ENCODE measurements at regions of chr18 and their contacts with region 1.

Region 1: GRCh38 chr18:80171054-80171872 is 62.2 kb downstream of the ADNP2 start:
- DNase-seq: peak in 1 of 2 experiments; percentile 96
- H3K4me3 ChIP-seq: no peak overlapping the region
- H3K27ac ChIP-seq: no peak overlapping the region
- H3K4me1 ChIP-seq: no peaks in the 10 kb centered on the region
- H3K27me3 ChIP-seq: no peaks in the 10 kb centered on the region
- CTCF ChIP-seq: peak; percentile 85 to 97 (median 93)
- EP300 ChIP-seq: no peak
- POLR2A ChIP-seq: no peak
- RAD21 ChIP-seq: peak; percentile 90

Region 2: GRCh38 chr18:79856119-79857007 is 314.9 kb before region 1 on chr18:
- CTCF ChIA-PET with region 1: no interaction called
- POLR2A ChIA-PET with region 1: no interaction called
- DNase-seq: peak; percentile 27 to 68
- H3K4me3 ChIP-seq: no peak overlapping the region
- H3K27ac ChIP-seq: no peak overlapping the region
- H3K4me1 ChIP-seq: peaks cover 0 to 5% (median 3%) of the 10 kb centered on the region in 4 experiments; a peak in 3 of 7 replicates
- H3K27me3 ChIP-seq: no peaks in the 10 kb centered on the region
- CTCF ChIP-seq: no peak
- EP300 ChIP-seq: no peak
- POLR2A ChIP-seq: no peak
- RAD21 ChIP-seq: no peak

Region 3: DNA sequence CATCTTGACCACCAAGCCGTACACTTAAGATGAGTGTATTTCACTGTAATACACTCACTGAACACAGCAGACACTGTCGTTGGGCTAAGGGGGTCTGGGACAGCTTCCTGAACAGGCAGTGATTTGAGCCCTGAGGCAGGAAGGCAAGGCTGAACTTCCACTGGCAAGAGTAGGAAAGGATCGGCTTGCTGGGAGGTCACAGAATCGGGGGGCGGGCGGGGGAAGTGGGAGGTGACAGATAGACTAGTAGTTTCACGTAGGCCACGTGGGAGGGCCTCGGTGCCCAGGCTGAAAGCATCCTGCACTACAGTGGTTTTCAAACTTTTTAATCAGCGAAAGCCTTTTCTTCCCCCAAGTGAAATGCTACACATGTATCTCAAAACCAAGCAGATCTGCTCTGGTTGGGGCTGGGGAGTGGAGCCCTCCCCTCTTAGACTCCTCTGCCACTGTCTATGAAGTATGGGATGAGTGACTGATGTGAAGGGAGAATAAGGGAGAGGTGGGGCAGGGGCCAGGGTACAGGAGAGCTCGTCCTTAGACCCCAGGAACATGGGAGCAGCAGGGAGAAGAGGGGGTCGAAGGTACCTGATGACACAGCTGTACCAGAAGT is 67.5 kb after region 1 on chr18:
- CTCF ChIA-PET with region 1: interaction called, 19 read pairs
- POLR2A ChIA-PET with region 1: interaction called, 3 read pairs
- DNase-seq: no peak
- H3K4me3 ChIP-seq: no peak overlapping the region
- H3K27ac ChIP-seq: no peak overlapping the region
- H3K4me1 ChIP-seq: peaks cover 0 to 4% (median 0%) of the 10 kb centered on the region in 4 experiments; a peak in 3 of 7 replicates
- H3K27me3 ChIP-seq: no peaks in the 10 kb centered on the region
- CTCF ChIP-seq: no peak
- EP300 ChIP-seq: no peak
- POLR2A ChIP-seq: no peak
- RAD21 ChIP-seq: no peak

Region 4: DNA sequence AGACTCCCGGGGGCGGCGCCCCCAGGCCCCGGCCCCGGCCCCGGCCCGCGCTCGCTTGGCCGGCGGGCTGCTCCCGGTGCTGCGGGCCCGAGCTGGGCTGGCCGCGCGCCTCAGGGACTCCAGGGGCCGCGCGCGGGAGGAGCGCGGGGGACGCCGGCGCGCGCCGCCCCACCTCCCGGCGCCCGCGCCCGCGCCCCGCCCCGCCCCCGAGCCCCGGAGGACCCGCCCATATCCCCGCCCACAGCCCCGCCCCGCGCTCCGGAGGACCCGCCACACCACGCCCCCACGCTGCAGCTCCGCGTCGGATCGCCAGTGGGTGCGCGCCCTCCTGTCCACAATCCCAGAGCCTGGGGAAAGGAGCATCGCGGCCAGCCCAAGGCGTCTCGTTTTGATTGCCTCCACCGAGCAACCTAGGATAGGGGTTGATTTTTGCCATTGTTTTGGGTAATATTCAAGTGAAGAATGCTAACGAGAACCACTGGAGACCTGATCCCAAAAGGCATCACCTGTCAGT is 76.2 kb after region 1 on chr18 and contains the start of gene PARD6G:
- CTCF ChIA-PET with region 1: interaction called, 11 read pairs
- POLR2A ChIA-PET with region 1: interaction called, 3 read pairs
- DNase-seq: peak in 1 of 2 experiments; percentile 79
- H3K4me3 ChIP-seq: peak within 1 kb of the TSS; percentile 71 to 96 (median 75)
- H3K27ac ChIP-seq: no peak within 1 kb of the TSS
- H3K4me1 ChIP-seq: peaks cover 0 to 5% (median 0%) of the 10 kb centered on the region in 4 experiments; a peak in 1 of 7 replicates
- H3K27me3 ChIP-seq: no peaks in the 10 kb centered on the region; a peak in 2 of 7 replicates
- CTCF ChIP-seq: peak in 1 of 3 experiments; percentile 5; a peak in 1 of 4 replicates
- EP300 ChIP-seq: no peak
- POLR2A ChIP-seq: no peak
- RAD21 ChIP-seq: peak in 1 of 2 experiments; percentile 21; a peak in 1 of 4 replicates
- total RNA-seq, gene PARD6G: 17.9 and 18.8 TPM in 2 replicates

Region 5: GRCh38 chr18:80253871-80254492 is 82.7 kb after region 1 on chr18:
- CTCF ChIA-PET with region 1: interaction called, 58 read pairs
- POLR2A ChIA-PET with region 1: no interaction called
- DNase-seq: peak in 1 of 2 experiments; percentile 72
- H3K4me3 ChIP-seq: no peak overlapping the region
- H3K27ac ChIP-seq: no peak overlapping the region
- H3K4me1 ChIP-seq: no peaks in the 10 kb centered on the region
- H3K27me3 ChIP-seq: no peaks in the 10 kb centered on the region; a peak in 1 of 7 replicates
- CTCF ChIP-seq: no peak
- EP300 ChIP-seq: no peak
- POLR2A ChIP-seq: no peak
- RAD21 ChIP-seq: no peak

Measured in H1 (cell line).